ENCODE measurements at regions of chr12 and their contacts with region 1.

Region 1: GRCh38 chr12:68497702-68498101 is 113.0 kb upstream of the RAP1B start:
- DNase-seq: peak; percentile 98
- H3K4me3 ChIP-seq: no peak overlapping the region
- H3K27me3 ChIP-seq: no peaks in the 10 kb centered on the region
- CTCF ChIP-seq: no peak

Region 2: DNA sequence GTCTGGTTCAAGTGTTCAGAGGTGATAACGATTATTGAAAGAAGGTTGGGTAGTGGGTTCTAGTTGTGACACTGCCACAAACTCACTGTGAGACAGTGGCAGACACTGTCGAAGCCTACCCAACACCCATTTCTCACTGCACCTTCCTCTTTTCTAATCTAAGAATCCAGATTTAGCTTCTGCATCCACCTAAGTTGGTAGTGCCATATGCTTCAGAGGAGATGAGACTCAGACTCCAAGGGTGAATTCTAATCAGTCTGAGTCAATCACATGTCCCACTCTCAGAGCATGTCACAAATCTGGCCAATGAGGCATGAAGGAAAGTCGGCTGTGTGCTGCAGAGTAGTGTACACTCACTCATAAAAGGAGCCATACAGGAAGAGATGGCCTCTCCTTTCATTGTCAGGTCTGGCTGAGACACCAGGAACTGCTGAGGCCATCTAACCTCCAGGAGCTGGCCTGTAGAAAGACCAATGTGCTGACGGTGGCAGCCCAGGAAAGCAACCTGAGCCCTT is 10.9 kb after region 1 on chr12:
- CTCF ChIA-PET with region 1: interaction called, 21 read pairs
- POLR2A ChIA-PET with region 1: no interaction called
- DNase-seq: no peak
- H3K4me3 ChIP-seq: no peak overlapping the region
- H3K27me3 ChIP-seq: no peaks in the 10 kb centered on the region
- CTCF ChIP-seq: no peak

Region 3: DNA sequence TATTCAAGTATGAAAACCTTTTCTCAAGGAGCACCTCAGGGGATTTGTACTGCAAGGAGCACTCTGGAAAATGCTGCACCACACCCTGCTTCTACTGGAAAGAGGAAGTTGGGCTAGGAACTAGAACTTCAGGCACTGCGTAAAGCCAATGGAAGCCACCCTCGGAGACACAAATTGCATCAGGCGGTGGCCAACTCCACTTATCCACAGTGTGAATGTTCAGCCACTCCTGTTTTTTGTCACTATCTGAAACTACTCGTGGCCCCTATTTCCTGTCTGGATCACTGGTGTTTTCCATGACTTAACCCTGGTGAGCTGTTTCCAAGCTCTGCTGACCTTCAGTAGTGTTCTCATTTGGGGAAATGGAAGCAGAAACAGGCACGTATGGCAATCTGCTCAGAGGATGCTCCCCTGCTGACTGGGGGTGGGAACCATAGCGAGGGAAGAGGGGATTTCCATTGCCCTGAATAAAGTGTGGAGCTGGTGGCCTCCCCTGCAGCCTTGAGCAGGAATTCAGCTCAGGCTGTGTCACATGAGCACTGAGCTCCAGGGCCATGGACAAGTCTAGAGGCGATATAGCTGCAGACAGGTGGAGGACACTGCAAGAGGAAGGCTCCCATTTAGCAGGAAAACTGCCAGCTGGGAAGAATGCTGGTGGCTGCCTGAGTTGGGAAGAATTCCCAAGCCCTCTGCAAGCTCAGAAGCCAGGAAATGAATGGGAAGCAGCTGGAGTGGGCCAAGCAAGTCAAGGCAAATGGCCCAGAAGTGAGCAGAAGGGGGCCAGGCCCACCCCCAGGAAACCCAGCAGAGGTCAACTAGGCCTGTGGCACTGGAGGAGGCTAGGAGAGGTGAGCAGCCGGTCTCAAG is 62.5 kb after region 1 on chr12:
- CTCF ChIA-PET with region 1: no interaction called
- POLR2A ChIA-PET with region 1: no interaction called
- DNase-seq: no peak
- H3K4me3 ChIP-seq: no peak overlapping the region
- H3K27me3 ChIP-seq: no peaks in the 10 kb centered on the region
- CTCF ChIP-seq: no peak